ENCODE measurements at regions of chrX and their contacts with region 1.

Region 1: GRCh38 chrX:24371391-24371972 is 11.0 kb downstream of the SUPT20HL1 start:
- DNase-seq: peak; percentile 34
- H3K4me3 Mint-ChIP-seq: peak overlapping the region; percentile 73
- H3K27ac Mint-ChIP-seq: peak overlapping the region; percentile 86
- H3K4me1 Mint-ChIP-seq: peaks cover 40% of the 10 kb centered on the region
- H3K27me3 Mint-ChIP-seq: no peaks in the 10 kb centered on the region

Region 2: DNA sequence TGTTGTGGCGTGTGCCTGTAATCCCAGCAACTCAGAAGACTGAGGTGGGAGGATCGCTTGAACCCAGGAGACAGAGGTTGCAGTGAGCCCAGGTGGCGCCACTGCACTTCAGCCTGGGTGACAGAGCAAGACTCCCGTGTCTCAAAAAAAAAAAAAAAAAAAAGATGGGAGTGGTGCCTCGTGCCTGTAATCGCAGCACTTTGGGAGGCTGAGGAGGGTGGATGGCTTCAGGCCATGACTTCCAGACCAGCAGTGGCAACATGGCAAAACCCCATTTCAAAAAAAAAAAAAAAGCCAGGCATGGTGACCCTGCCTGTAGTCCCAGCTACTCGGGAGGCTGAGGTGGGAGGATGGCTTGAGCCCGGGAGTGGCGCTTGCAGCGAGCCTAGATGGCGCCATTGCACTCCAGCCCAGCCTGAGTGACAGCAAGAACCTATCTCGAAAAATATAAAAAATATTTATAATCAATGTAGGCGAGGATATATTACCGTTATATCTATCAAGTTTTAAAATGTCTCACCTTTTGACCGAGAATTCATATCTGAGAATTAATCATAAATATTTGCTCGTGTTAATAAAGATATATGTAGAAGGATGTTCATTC is 289.7 kb before region 1 on chrX:
- intact Hi-C with region 1: loop called (anchors 2 kb)
- DNase-seq: peak; percentile 21
- H3K4me3 Mint-ChIP-seq: peak overlapping the region; percentile 11
- H3K27ac Mint-ChIP-seq: no peak overlapping the region
- H3K4me1 Mint-ChIP-seq: peaks cover 13% of the 10 kb centered on the region
- H3K27me3 Mint-ChIP-seq: no peaks in the 10 kb centered on the region

Region 3: GRCh38 chrX:24259544-24260240 is 111.8 kb before region 1 on chrX:
- intact Hi-C with region 1: loop called (anchors 2 kb)
- DNase-seq: peak; percentile 5
- H3K4me3 Mint-ChIP-seq: no peak overlapping the region
- H3K27ac Mint-ChIP-seq: peak overlapping the region; percentile 44
- H3K4me1 Mint-ChIP-seq: peaks cover 27% of the 10 kb centered on the region
- H3K27me3 Mint-ChIP-seq: no peaks in the 10 kb centered on the region

Region 4: GRCh38 chrX:24294620-24295019 is 76.9 kb before region 1 on chrX:
- intact Hi-C with region 1: loop called (anchors 1 kb)
- DNase-seq: peak; percentile 2
- H3K4me3 Mint-ChIP-seq: no peak overlapping the region
- H3K27ac Mint-ChIP-seq: no peak overlapping the region
- H3K4me1 Mint-ChIP-seq: no peaks in the 10 kb centered on the region
- H3K27me3 Mint-ChIP-seq: no peaks in the 10 kb centered on the region

Region 5: DNA sequence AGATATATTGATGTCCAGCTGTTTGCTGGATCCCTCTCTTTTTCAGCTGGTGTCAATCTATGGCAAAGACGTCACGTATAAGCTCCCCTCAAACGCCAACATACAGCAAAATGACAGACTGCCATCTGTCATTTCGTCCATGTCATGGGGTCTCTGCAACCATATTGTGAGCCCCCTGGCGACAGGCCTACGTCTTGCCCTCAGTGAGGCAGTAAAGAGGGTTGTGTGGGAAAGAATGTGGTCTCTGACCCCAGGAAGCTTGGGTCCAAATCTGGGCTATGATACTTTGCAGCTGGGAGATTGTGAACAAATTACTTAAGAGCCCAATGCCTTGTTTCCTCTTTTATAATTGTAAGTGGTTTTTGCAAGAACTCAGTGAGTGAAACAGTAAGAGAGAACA is 65.0 kb before region 1 on chrX:
- intact Hi-C with region 1: loop called (anchors 2 kb)
- DNase-seq: no peak
- H3K4me3 Mint-ChIP-seq: no peak overlapping the region
- H3K27ac Mint-ChIP-seq: no peak overlapping the region
- H3K4me1 Mint-ChIP-seq: peaks cover 24% of the 10 kb centered on the region
- H3K27me3 Mint-ChIP-seq: no peaks in the 10 kb centered on the region

Region 6: DNA sequence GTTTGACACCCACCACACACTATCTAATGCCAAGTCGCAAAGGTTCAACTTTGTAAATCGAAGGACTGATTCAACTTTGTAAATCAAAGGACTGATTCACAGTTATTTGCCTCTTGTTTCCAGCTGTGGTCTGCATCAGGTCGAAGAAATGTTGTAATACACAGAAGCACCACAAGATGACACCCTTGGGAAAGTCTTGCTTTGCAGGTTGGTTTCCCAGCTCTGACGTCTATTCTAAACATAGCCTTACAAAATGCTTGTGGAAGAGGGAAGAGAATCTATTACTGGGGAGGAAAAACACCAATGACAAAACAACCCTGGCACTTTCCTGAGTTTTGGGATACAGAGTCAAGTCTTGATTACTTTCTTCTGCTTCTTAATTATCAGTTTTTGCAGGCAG is 24.3 kb after region 1 on chrX:
- intact Hi-C with region 1: loop called (anchors 2 kb)
- DNase-seq: peak; percentile 27
- H3K4me3 Mint-ChIP-seq: no peak overlapping the region
- H3K27ac Mint-ChIP-seq: no peak overlapping the region
- H3K4me1 Mint-ChIP-seq: peaks cover 6% of the 10 kb centered on the region
- H3K27me3 Mint-ChIP-seq: peaks cover 2% of the 10 kb centered on the region

Region 7: DNA sequence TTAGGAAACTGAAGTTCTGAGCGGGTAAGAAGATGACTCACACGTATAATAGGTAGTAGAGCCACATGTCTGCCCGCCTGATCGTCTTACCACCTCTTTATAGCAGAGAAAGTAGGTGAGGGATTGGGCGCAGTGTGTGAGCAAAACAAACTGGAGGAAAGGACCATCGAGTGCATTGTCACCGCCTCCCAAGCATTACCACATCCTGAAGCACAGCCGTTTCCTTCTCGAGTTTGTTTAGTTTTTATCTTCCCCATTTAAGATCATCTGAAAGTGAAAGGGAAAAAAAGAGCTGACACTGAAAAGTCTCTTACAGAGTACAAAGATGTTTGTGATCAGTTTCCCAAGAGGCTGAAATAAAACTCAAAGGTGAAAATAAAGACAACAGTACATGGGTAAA is 108.4 kb after region 1 on chrX:
- intact Hi-C with region 1: loop called (anchors 5 kb)
- DNase-seq: peak; percentile 71
- H3K4me3 Mint-ChIP-seq: peak overlapping the region; percentile 65
- H3K27ac Mint-ChIP-seq: peak overlapping the region; percentile 92
- H3K4me1 Mint-ChIP-seq: peaks cover 45% of the 10 kb centered on the region
- H3K27me3 Mint-ChIP-seq: no peaks in the 10 kb centered on the region

Region 8: DNA sequence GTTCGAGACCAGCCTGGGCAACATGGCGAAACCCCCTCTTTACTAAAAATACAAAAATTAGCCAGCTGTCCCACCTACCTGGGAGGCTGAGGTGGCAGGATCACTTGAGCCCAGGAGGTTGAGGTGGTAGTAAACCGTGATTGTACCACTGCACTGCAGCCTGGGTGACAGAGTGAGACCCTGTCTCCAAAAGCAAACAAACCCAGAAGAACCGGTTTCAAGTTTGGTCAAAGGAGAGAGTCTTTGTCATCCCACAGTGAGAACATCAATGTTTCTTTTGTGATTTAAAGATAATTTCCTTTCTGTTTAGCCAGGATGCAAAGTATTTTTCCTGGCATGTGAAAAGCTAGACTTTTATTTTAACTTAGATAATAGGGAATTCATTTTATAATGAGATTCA is 120.3 kb after region 1 on chrX:
- intact Hi-C with region 1: no loop called
- DNase-seq: no peak
- H3K4me3 Mint-ChIP-seq: no peak overlapping the region
- H3K27ac Mint-ChIP-seq: no peak overlapping the region
- H3K4me1 Mint-ChIP-seq: peaks cover 29% of the 10 kb centered on the region
- H3K27me3 Mint-ChIP-seq: no peaks in the 10 kb centered on the region

Measured in activated T-helper 1 cell treated with anti-CD3 and anti-CD28 coated beads, Interleukin-12 subunit alpha, Interleukin-12 subunit beta, Interleukin-2, Interleukin-4 antibody, amounts not matched to agents 30 ng/mL and 10 ng/mL and 1 ng/mL, durations not matched to agents 14 hours and 24 hours and 36 hours (primary cell).